ENCODE measurements at regions of chr16 and their contacts with region 1.

Region 1: DNA sequence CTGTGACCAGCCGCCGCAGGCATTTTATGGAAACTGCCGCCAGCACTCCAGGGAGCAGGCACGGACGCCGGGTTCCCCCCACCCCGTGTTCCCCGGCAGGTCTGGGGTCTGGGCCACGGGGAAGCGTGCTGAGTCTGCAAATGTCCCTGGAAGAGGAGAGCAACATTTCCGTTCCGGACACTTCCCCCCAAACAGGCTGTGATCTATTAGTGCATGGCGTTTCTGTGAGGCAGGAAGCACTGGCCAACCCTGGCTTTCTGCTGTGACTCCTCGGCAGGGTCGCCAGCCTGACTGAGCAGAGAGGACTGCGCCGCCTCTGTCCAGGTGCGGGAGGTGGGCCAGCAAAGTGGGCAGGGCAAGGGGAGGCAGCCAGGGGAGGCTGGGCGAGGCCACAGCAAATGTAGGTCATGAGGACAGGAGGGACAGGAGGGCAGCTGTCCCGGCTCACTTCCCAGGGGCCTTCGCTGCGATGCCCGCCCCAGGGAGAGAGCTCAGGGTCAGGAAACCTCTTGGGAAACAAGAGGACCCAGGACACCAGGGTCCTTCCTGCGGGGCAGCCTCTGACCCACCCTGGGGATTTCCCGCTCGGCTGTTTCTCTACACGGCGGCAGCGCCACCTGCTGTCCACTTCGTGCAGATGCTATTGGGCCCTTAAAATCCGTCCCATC is 9.5 kb downstream of the FOXF1 start:
- DNase-seq: peak in 1 of 3 donors; percentile 54
- ATAC-seq: peak; percentile 60 to 78 (median 75)
- H3K4me3 ChIP-seq: no peak overlapping the region
- H3K27ac ChIP-seq: no peak overlapping the region
- H3K4me1 ChIP-seq: no peaks in the 10 kb centered on the region
- H3K27me3 ChIP-seq: peaks cover 0 to 13% of the 10 kb centered on the region in 2 donors
- CTCF ChIP-seq: peak; percentile 69 to 98 (median 92)
- POLR2A ChIP-seq: no peak

Region 2: GRCh38 chr16:85878874-85879273 is 640.9 kb before region 1 on chr16:
- intact Hi-C with region 1: no loop called
- DNase-seq: no peak
- ATAC-seq: peak in 3 of 4 donors; percentile 19 to 27 (median 22)
- H3K4me3 ChIP-seq: no peak overlapping the region
- H3K27ac ChIP-seq: no peak overlapping the region
- H3K4me1 ChIP-seq: no peaks in the 10 kb centered on the region
- H3K27me3 ChIP-seq: no peaks in the 10 kb centered on the region
- CTCF ChIP-seq: no peak
- POLR2A ChIP-seq: no peak

Region 3: DNA sequence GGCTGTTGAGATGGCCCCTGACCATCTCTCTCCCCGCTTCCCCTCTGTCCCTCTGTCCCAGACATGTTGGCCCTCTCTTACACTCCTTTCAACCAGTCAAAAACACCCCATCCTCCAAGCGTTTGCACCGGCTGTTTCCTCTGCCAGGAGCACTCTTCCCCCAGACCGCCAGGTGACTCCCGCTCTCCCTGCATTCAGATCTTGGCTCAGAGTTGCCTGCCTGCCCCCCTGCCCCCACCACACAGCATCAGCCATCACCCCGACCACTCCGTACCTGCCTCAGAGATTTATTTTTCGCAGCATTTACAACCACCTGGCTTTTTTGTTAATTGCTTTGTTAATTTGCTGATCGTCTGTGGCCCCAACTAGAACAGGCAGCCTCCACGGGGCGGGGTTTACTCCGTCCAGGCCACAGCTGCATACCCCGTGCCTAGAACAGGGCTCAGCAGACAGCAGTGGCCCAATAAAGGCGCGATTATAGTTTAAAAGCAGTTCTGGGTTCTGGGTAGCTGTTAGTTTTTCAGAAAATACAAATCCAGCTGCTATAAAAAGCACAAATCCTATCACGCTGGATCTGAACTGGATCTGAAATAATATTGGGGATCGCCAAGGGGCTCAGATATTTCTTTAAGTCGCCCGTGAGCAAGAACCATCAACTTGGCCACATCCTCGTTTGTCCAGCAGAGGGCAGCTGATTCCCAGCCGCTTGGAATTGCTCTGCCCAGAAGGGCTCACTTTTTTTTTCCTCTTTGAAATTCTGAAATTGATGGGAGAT is 447.3 kb before region 1 on chr16:
- intact Hi-C with region 1: loop called (anchors 5 kb)
- DNase-seq: peak in 2 of 3 donors; percentile 42 to 57
- ATAC-seq: peak; percentile 47 to 76 (median 70)
- H3K4me3 ChIP-seq: no peak overlapping the region
- H3K27ac ChIP-seq: no peak overlapping the region
- H3K4me1 ChIP-seq: no peaks in the 10 kb centered on the region
- H3K27me3 ChIP-seq: peaks cover 0 to 4% of the 10 kb centered on the region in 2 donors
- CTCF ChIP-seq: peak; percentile 51 to 80 (median 73)
- POLR2A ChIP-seq: no peak

Region 4: DNA sequence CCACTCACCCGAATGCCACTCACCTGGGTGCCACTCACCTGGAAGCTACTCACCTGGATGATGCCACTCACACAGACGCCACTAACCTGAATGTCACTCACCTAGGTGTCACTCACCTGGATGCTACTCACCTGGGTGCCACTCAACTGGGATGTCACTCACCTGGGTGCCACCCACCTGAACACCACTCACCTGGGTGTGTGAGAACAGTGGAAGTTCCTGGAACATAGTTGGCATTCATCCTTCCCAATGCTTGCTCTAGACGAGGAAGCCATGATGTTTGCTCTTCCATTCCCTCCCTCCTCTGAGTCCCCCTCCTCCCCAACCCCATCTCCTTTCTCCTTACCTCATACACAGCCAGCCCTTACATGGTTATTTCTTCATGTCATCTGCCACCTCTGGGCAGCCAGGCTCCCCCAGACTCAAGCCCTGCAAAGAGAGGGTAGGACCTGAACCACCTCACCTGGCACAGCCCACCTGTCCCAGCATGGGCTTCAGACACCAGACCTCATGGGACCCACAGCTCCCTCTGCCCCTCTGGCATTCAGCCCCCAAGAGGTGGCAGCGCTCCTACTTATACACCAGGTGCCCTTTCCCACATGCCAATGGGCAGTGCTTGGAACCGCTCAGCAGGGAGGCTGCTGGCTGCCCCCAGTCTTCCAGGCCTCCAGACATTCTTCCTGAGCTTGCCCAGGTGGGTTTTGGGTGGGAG is 181.2 kb before region 1 on chr16:
- intact Hi-C with region 1: loop called (anchors 5 kb)
- DNase-seq: no peak
- ATAC-seq: no peak
- H3K4me3 ChIP-seq: no peak overlapping the region
- H3K27ac ChIP-seq: no peak overlapping the region
- H3K4me1 ChIP-seq: no peaks in the 10 kb centered on the region
- H3K27me3 ChIP-seq: no peaks in the 10 kb centered on the region
- CTCF ChIP-seq: no peak
- POLR2A ChIP-seq: no peak

Region 5: DNA sequence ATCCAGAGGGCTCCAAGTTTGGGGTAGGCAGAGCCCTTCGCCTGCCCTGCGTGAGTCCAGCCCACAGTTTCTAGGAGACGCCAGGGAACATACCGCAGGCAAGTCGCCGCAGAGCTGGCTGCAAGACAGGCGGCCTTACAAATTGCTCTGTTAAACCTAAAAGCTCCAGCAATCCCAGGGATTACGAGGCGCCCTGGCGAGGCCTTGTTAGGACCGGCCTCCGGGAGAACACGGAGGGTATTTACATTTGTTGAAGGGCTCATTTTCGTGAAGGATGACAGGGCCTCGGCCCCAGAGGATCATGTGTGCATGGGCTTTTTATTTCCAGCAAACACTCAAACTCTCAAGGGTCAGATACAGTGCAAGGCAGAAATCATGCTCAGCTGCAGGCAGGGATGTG is 87.1 kb before region 1 on chr16:
- intact Hi-C with region 1: no loop called
- DNase-seq: no peak
- ATAC-seq: no peak
- H3K4me3 ChIP-seq: no peak overlapping the region
- H3K27ac ChIP-seq: no peak overlapping the region
- H3K4me1 ChIP-seq: no peaks in the 10 kb centered on the region
- H3K27me3 ChIP-seq: no peaks in the 10 kb centered on the region
- CTCF ChIP-seq: no peak
- POLR2A ChIP-seq: no peak

Measured in right lobe of liver (tissue), 6 donors.